PC-9 (cell line): ENCODE measurements at regions of chr4 and their contacts with region 1.

Region 1: DNA sequence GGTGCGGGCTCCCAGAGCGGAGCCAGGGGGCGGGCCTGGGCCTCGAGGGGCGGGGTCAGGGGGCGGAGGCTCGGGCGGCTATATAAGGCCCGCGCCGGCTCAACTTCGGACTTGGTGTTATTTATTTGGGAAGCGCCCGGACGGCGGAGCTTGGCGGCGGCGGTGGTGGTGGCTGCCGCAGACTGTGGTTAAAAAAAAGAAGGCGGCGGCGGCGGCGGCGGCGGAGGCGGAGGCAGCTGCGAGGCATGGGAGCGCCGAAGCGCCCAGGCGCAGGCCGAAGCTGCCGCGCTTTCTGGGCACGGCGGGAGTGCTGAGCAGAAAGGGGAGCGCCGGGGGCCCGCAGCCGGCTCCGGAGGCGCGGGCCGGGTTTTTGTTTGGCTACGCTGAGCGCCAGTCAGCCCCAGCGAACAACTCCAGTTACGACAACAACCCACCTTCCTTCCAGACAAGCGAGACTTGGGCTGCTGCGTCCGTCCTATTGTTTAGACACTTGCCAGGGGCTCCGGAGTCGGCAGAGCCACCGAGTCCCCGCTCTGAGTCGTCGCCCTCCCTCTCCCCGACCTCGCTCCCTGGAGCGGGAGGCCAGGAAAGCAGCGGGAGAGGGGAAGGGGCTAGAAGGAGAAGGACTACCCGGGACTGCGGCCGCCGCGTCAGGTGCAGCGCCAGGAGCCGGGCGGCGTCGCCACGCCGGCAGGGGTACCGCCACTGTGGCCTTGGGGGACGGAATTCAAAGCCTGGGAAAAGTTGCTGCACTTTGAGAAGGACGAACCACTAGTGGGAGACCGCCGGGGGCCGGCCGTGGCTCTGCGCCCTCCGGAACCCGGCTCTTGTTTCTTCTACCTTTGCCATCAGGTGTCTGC is at the start of gene SLIT2:
- DNase-seq: peak in 1 of 2 experiments; percentile 84
- H3K4me3 ChIP-seq: peak within 1 kb of the TSS; percentile 50
- H3K27ac ChIP-seq: no peak within 1 kb of the TSS
- H3K4me1 ChIP-seq: no peaks in the 10 kb centered on the region
- H3K27me3 ChIP-seq: peaks cover 8% of the 10 kb centered on the region; the same call in 1 of the 2 replicates
- CTCF ChIP-seq: no peak
- total RNA-seq, gene SLIT2: 4.8 and 5.3 TPM in 2 replicates

Region 2: DNA sequence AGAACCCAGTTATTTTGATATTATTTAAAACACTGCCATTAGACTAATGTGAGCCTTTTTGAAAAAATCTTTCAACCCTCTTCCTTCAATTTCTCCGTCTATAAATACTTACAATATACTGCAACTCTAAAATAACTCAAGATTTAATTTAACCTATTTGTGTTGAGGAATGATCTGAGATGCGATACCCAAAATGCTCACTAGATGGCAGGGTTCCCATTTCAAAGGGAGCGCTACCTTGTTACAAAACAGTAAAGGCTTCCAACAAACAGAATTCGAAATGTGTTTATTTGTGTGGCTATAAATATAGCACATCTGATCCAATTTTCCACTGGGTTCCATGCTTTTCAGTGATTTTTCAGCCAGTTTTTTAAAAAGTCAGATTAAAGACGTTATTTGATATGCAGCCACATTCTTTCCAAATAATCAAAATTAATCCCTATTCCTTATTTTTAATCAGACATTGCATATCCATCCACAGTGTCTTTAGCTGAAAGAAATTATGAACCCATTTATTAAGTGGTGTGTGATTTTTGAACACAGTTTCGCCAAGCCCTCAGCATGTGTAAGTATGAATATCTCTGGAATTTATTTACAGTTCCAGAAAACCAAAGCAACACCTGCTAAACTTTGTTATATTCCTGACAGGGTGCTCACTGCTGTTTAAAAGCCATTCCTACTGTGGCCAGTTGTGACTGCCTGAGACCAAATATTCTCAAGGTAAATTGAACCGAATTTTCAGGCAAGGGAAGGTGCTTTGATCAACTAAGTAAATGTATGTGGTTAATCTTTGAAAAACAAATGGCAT is 1562.5 kb before region 1 on chr4:
- CTCF ChIA-PET with region 1: no interaction called
- POLR2A ChIA-PET with region 1: no interaction called
- intact Hi-C with region 1: loop called (anchors 1 kb)
- DNase-seq: peak in 1 of 2 experiments; percentile 44
- H3K4me3 ChIP-seq: no peak overlapping the region
- H3K27ac ChIP-seq: no peak overlapping the region
- H3K4me1 ChIP-seq: no peaks in the 10 kb centered on the region
- H3K27me3 ChIP-seq: no peaks in the 10 kb centered on the region
- CTCF ChIP-seq: peak; percentile 85

Region 3: GRCh38 chr4:19309378-19309777 is 942.6 kb before region 1 on chr4:
- CTCF ChIA-PET with region 1: interaction called, 4 read pairs
- POLR2A ChIA-PET with region 1: no interaction called
- intact Hi-C with region 1: loop called (anchors 5 kb)
- DNase-seq: no peak
- H3K4me3 ChIP-seq: no peak overlapping the region
- H3K27ac ChIP-seq: no peak overlapping the region
- H3K4me1 ChIP-seq: no peaks in the 10 kb centered on the region
- H3K27me3 ChIP-seq: no peaks in the 10 kb centered on the region
- CTCF ChIP-seq: no peak

Region 4: GRCh38 chr4:19531906-19532848 is 719.8 kb before region 1 on chr4:
- CTCF ChIA-PET with region 1: no interaction called
- POLR2A ChIA-PET with region 1: no interaction called
- intact Hi-C with region 1: no loop called
- DNase-seq: no peak
- H3K4me3 ChIP-seq: no peak overlapping the region
- H3K27ac ChIP-seq: no peak overlapping the region
- H3K4me1 ChIP-seq: no peaks in the 10 kb centered on the region
- H3K27me3 ChIP-seq: no peaks in the 10 kb centered on the region
- CTCF ChIP-seq: no peak

Region 5: DNA sequence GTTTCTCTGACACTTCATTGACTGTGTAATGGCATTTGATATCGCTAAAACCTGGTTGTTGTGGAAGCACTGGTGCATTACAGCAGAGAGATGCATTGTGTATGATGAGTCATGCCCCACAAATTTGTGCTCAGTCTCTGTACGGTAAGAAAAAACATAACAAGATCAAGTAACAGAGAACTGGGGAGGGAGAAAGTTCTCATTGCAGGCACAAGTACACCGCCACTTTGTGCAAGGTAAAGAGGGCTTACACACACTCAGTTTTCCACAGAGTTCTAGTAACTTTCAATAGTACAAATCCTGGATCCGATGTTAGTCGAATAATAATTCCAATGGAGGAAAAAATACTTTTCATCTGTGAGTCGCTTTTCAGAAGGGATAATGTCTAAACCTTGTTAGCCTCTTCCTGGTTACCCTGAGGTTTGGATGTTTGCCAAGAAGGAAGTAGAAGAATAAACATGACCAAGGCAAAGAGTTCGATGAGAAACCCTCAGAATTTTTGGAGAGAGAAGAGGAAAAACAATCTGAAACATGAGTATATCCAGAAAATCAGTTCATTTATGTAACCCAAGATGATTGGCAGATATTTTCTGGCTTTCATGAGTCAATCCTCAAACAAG is 512.8 kb before region 1 on chr4:
- CTCF ChIA-PET with region 1: no interaction called
- POLR2A ChIA-PET with region 1: no interaction called
- intact Hi-C with region 1: loop called (anchors 5 kb)
- DNase-seq: peak; percentile 64 to 82
- H3K4me3 ChIP-seq: peak overlapping the region; percentile 27; the same call in 1 of the 2 replicates
- H3K27ac ChIP-seq: peak overlapping the region; percentile 83
- H3K4me1 ChIP-seq: 0 out of 2 replicates have a peak, but pooled peaks cover 19% of the 10 kb centered on the region
- H3K27me3 ChIP-seq: no peaks in the 10 kb centered on the region
- CTCF ChIP-seq: no peak

Region 6: GRCh38 chr4:20284990-20285389 is 33.0 kb after region 1 on chr4:
- CTCF ChIA-PET with region 1: no interaction called
- POLR2A ChIA-PET with region 1: no interaction called
- intact Hi-C with region 1: loop called (anchors 5 kb)
- DNase-seq: no peak
- H3K4me3 ChIP-seq: no peak overlapping the region
- H3K27ac ChIP-seq: no peak overlapping the region
- H3K4me1 ChIP-seq: no peaks in the 10 kb centered on the region
- H3K27me3 ChIP-seq: no peaks in the 10 kb centered on the region
- CTCF ChIP-seq: no peak

Region 7: GRCh38 chr4:20544645-20545044 is 292.6 kb after region 1 on chr4:
- CTCF ChIA-PET with region 1: no interaction called
- POLR2A ChIA-PET with region 1: interaction called, 7 read pairs
- intact Hi-C with region 1: loop called (anchors 10 kb)
- DNase-seq: no peak
- H3K4me3 ChIP-seq: no peak overlapping the region
- H3K27ac ChIP-seq: no peak overlapping the region
- H3K4me1 ChIP-seq: no peaks in the 10 kb centered on the region
- H3K27me3 ChIP-seq: no peaks in the 10 kb centered on the region
- CTCF ChIP-seq: peak; percentile 56